ENCODE measurements at regions of chr10 and their contacts with region 1.

Region 1: GRCh38 chr10:23438550-23439441 is at the start of gene OTUD1:
- DNase-seq: peak; percentile 91
- ATAC-seq: peak; percentile 91
- H3K4me3 ChIP-seq: peak within 1 kb of the TSS; percentile 90
- H3K27ac ChIP-seq: peak within 1 kb of the TSS; percentile 72
- H3K4me1 ChIP-seq: no peaks in the 10 kb centered on the region; the same call in 1 of the 2 replicates
- H3K27me3 ChIP-seq: no peaks in the 10 kb centered on the region
- CTCF ChIP-seq: peak; percentile 4; the same call in 1 of the 2 replicates
- POLR2A ChIP-seq: peak; percentile 52
- RAD21 ChIP-seq: 0 out of 2 replicates have a peak, but pooled peaks have one; percentile 6
- total RNA-seq, gene OTUD1: 1.3 and 3.3 TPM in 2 replicates

Region 2: DNA sequence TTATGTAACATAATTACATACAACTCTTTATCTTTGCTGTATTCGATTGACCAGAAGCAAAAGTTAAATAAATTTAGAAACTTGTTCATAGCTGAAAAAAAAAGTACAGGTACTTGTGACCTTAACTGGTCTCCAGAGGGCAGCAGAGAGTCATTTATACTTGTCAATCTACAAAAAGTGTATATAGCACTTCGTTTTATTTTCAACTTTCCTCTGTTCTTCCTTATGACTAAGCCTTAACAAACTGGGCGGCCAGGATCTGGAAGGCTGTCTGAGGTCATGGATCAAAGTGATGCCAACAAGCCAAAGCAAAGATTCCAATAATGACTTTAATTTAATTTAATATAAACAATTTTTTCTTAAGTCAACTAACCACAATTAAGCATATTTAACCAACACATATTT is 124.0 kb before region 1 on chr10:
- CTCF ChIA-PET with region 1: no interaction called
- POLR2A ChIA-PET with region 1: no interaction called
- dilution Hi-C with region 1: no loop called
- in situ Hi-C with region 1: no loop called
- intact Hi-C with region 1: loop called (anchors 1 kb)
- DNase-seq: peak; percentile 88
- ATAC-seq: peak; percentile 76
- H3K4me3 ChIP-seq: no peak overlapping the region
- H3K27ac ChIP-seq: no peak overlapping the region
- H3K4me1 ChIP-seq: peaks cover 6% of the 10 kb centered on the region; the same call in 1 of the 2 replicates
- H3K27me3 ChIP-seq: no peaks in the 10 kb centered on the region; the same call in 1 of the 2 replicates
- CTCF ChIP-seq: peak; percentile 80
- POLR2A ChIP-seq: no peak
- RAD21 ChIP-seq: peak; percentile 87

Region 3: GRCh38 chr10:23344241-23344841 is 94.5 kb before region 1 on chr10 and contains the start of gene C10orf67:
- CTCF ChIA-PET with region 1: no interaction called
- POLR2A ChIA-PET with region 1: no interaction called
- dilution Hi-C with region 1: no loop called
- in situ Hi-C with region 1: no loop called
- intact Hi-C with region 1: loop called (anchors 2 kb)
- DNase-seq: peak; percentile 39
- ATAC-seq: peak; percentile 60
- H3K4me3 ChIP-seq: peak within 1 kb of the TSS; percentile 54
- H3K27ac ChIP-seq: peak within 1 kb of the TSS; percentile 25
- H3K4me1 ChIP-seq: peaks cover 3% of the 10 kb centered on the region
- H3K27me3 ChIP-seq: no peaks in the 10 kb centered on the region
- CTCF ChIP-seq: no peak
- POLR2A ChIP-seq: no peak
- RAD21 ChIP-seq: no peak
- total RNA-seq, gene C10orf67: 0.18 and 0.28 TPM in 2 replicates

Region 4: GRCh38 chr10:23399701-23400144 is 39.1 kb before region 1 on chr10:
- CTCF ChIA-PET with region 1: no interaction called
- POLR2A ChIA-PET with region 1: no interaction called
- dilution Hi-C with region 1: no loop called
- in situ Hi-C with region 1: no loop called
- intact Hi-C with region 1: loop called (anchors 1 kb)
- DNase-seq: peak; percentile 97
- ATAC-seq: peak; percentile 92
- H3K4me3 ChIP-seq: no peak overlapping the region
- H3K27ac ChIP-seq: no peak overlapping the region
- H3K4me1 ChIP-seq: peaks cover 5% of the 10 kb centered on the region
- H3K27me3 ChIP-seq: no peaks in the 10 kb centered on the region; the same call in 1 of the 2 replicates
- CTCF ChIP-seq: no peak
- POLR2A ChIP-seq: no peak
- RAD21 ChIP-seq: no peak

Measured in IMR-90 (cell line).